GM10248 (cell line): ENCODE measurements at regions of chr16 and their contacts with region 1.

Region 1: GRCh38 chr16:14310519-14310991 is 239.4 kb downstream of the MRTFB start:
- DNase-seq: peak; percentile 70
- CTCF ChIP-seq: peak; percentile 17

Region 2: DNA sequence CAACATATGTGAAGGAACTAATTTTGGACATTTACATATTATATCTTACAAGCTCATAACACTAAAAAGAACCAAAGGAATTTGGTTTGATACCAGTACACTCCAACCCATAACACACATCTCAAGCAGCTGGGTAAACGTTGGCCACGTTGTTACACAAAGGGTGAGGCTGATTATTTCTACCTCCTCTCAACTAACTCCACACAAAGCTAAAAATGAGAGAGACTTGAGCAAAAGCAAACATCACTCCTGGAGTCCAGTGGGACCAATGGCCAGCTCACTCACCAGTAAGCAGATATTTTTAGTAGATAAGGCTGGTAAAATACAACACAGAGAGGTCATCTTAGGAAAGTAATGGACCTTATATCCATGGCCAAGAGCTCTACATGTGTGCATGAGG is 31.8 kb before region 1 on chr16:
- CTCF ChIA-PET with region 1: no interaction called
- POLR2A ChIA-PET with region 1: no interaction called
- DNase-seq: no peak
- CTCF ChIP-seq: no peak

Region 3: GRCh38 chr16:14334366-14335139 is 24.0 kb after region 1 on chr16:
- CTCF ChIA-PET with region 1: interaction called, 14 read pairs
- POLR2A ChIA-PET with region 1: no interaction called
- DNase-seq: no peak
- CTCF ChIP-seq: no peak